ENCODE measurements at regions of chr14 and their contacts with region 1.

Region 1: DNA sequence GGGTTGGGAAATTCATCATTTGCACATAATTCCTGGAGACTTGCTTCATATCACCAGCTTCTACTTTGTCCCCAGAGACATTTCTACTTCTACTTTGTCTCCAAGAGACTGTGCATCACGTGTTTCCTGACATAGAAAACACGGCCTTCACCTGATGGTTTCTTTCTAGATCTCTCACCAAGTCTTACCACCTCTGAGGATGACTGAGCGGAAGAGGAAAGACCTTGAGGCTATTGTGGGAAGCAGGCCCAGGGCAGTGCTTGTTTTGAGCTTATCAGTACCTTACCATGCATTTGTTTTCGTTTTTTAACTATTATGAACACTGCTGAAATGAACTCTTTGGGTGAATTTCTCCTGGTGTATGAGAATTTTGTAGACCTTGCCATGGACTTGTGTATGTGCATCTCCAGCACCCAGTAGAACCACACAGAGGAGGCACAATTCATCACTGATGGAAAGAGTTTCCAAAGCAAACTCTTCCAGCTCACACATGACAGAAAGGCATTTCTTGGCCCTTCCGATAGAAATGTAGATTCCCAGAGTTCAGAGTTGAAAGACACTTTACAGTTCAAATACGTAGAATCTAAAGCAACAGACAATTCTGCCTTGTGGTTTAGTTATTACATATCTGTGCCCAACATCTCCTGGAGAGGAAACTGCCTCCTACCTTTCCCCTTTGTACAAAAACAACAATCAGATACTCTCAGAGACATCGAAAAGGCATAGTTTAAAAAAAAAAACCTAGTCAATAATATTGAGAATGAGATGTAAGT is 434.7 kb downstream of the FUT8 start:
- DNase-seq: peak; percentile 88 to 93 (median 90)
- H3K4me3 ChIP-seq: peak overlapping the region; percentile 30 to 43
- H3K4me3 Mint-ChIP-seq: peak overlapping the region; percentile 65 to 90 (median 80)
- H3K27ac ChIP-seq: peak overlapping the region; percentile 57
- H3K27ac Mint-ChIP-seq: peak overlapping the region; percentile 91 to 98 (median 96)
- H3K4me1 ChIP-seq: peaks cover 98% of the 10 kb centered on the region
- H3K4me1 Mint-ChIP-seq: peaks cover 64 to 92% (median 79%) of the 10 kb centered on the region in 4 donors
- H3K27me3 ChIP-seq: no peaks in the 10 kb centered on the region
- H3K27me3 Mint-ChIP-seq: no peaks in the 10 kb centered on the region

Region 2: DNA sequence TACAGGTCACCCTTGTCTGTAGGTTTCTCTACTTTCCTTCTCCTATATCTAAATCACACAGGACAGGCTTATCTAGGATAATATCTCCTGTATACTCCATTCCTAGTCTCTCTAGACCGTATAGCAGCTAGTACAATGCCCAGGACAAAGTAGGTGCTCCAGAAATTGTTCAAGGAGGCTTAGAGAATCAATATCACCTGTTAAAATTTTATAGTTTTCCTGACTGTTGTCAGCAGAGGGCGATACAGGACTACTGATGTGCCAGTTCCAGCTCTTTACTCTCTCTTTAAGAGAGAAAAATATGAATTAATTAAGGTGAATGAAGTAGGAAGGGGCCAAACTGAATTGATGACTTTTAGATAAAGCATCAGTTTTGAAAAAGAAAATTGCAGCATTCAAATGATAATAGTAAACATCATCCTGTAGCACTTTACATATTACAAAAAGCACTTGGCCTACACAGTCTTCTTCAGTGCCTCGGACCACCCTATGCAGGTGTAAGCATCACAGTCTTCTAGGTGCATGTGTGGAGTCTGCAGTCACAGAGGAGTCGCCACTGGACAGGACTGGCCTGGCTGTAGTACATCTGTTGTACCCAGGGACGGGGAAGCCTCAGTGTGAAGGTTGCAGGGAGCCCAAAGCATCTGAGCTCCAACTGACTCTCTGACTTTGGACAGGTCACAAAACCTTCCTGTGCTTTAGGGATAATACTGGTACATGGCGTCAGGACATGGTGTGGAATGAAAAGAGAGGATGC is 683.0 kb before region 1 on chr14:
- CTCF ChIA-PET with region 1: interaction called, 6 read pairs
- POLR2A ChIA-PET with region 1: interaction called, 10 read pairs
- intact Hi-C with region 1: no loop called
- DNase-seq: peak in 4 of 5 donors; percentile 57 to 64 (median 59)
- H3K4me3 ChIP-seq: no peak overlapping the region
- H3K4me3 Mint-ChIP-seq: no peak overlapping the region
- H3K27ac ChIP-seq: no peak overlapping the region
- H3K27ac Mint-ChIP-seq: no peak overlapping the region
- H3K4me1 ChIP-seq: no peaks in the 10 kb centered on the region
- H3K4me1 Mint-ChIP-seq: peaks cover 0 to 7% (median 5%) of the 10 kb centered on the region in 4 donors
- H3K27me3 ChIP-seq: no peaks in the 10 kb centered on the region
- H3K27me3 Mint-ChIP-seq: no peaks in the 10 kb centered on the region

Region 3: DNA sequence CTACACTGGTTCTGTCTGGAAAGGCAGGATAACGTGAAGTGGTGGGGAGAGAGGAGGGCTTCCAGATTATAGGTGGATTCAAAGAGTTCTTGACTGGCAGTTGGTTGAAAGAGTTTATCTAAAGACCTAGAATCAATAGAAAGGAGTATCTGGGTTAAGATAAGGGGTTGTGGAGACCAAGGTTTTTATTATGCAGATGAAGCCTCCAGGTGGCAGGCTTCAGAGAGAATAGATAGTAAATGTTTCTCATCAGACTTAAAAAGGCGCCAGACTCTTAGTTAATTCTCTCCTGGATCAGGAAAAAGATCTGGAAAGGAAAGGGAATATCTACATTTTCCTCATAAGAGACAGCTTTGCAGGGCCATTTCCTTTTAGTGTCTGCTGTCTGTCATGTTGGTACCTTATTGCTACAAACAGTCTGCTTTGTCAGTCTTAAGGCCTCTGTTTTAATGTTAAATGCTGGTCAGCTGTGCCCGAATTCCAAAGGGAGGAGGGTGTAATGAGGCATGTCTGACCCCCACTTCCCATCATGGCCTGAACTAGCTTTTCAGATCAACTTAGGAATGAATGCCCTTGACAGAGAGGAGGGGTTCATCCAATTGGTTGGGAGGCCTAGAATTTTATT is 33.4 kb before region 1 on chr14:
- CTCF ChIA-PET with region 1: no interaction called
- POLR2A ChIA-PET with region 1: no interaction called
- intact Hi-C with region 1: no loop called
- DNase-seq: peak in 1 of 5 donors; percentile 3
- H3K4me3 ChIP-seq: no peak overlapping the region
- H3K4me3 Mint-ChIP-seq: peak overlapping the region in 1 of 8 donors; percentile 20
- H3K27ac ChIP-seq: no peak overlapping the region
- H3K27ac Mint-ChIP-seq: no peak overlapping the region
- H3K4me1 ChIP-seq: no peaks in the 10 kb centered on the region
- H3K4me1 Mint-ChIP-seq: peaks cover 0 to 5% (median 0%) of the 10 kb centered on the region in 4 donors
- H3K27me3 ChIP-seq: no peaks in the 10 kb centered on the region
- H3K27me3 Mint-ChIP-seq: no peaks in the 10 kb centered on the region

Region 4: GRCh38 chr14:65860956-65861611 is 13.8 kb after region 1 on chr14:
- CTCF ChIA-PET with region 1: interaction called, 19 read pairs
- POLR2A ChIA-PET with region 1: interaction called, 52 read pairs
- intact Hi-C with region 1: loop called (anchors 2 kb)
- DNase-seq: peak in 4 of 5 donors; percentile 31 to 51 (median 38)
- H3K4me3 ChIP-seq: no peak overlapping the region
- H3K4me3 Mint-ChIP-seq: peak overlapping the region in 6 of 8 donors; percentile 0 to 74 (median 58)
- H3K27ac ChIP-seq: no peak overlapping the region
- H3K27ac Mint-ChIP-seq: peak overlapping the region; percentile 0 to 62 (median 14)
- H3K4me1 ChIP-seq: peaks cover 47% of the 10 kb centered on the region
- H3K4me1 Mint-ChIP-seq: peaks cover 45 to 65% (median 52%) of the 10 kb centered on the region in 4 donors
- H3K27me3 ChIP-seq: no peaks in the 10 kb centered on the region
- H3K27me3 Mint-ChIP-seq: no peaks in the 10 kb centered on the region

Region 5: DNA sequence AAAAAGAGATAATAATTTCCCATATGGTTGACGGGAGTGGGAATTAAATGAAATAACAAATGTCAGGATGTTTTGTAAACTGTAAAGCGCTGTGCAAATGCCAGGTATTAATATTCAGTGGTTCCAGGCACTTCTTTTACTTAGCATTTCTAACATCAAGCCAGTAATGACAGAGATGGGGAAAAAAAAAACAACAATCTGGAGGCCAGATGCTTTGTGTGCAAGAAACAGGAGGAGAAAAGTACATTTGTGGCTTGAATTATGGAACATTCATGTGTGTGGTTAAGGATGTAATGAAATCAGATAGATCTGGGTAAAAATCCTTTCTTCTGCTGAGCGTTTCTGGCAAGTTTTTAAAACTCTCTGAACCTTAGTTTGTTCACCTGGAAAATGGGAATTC is 74.9 kb after region 1 on chr14:
- CTCF ChIA-PET with region 1: interaction called, 15 read pairs
- POLR2A ChIA-PET with region 1: interaction called, 102 read pairs
- intact Hi-C with region 1: loop called (anchors 1 kb)
- DNase-seq: no peak
- H3K4me3 ChIP-seq: no peak overlapping the region
- H3K4me3 Mint-ChIP-seq: no peak overlapping the region
- H3K27ac ChIP-seq: no peak overlapping the region
- H3K27ac Mint-ChIP-seq: no peak overlapping the region
- H3K4me1 ChIP-seq: peaks cover 21% of the 10 kb centered on the region
- H3K4me1 Mint-ChIP-seq: peaks cover 19 to 51% (median 27%) of the 10 kb centered on the region in 4 donors
- H3K27me3 ChIP-seq: no peaks in the 10 kb centered on the region
- H3K27me3 Mint-ChIP-seq: no peaks in the 10 kb centered on the region

Region 6: GRCh38 chr14:65940056-65940733 is 92.9 kb after region 1 on chr14:
- CTCF ChIA-PET with region 1: no interaction called
- POLR2A ChIA-PET with region 1: interaction called, 12 read pairs
- intact Hi-C with region 1: no loop called
- DNase-seq: no peak
- H3K4me3 ChIP-seq: no peak overlapping the region
- H3K4me3 Mint-ChIP-seq: no peak overlapping the region
- H3K27ac ChIP-seq: no peak overlapping the region
- H3K27ac Mint-ChIP-seq: no peak overlapping the region
- H3K4me1 ChIP-seq: peaks cover 58% of the 10 kb centered on the region
- H3K4me1 Mint-ChIP-seq: peaks cover 31 to 65% (median 55%) of the 10 kb centered on the region in 4 donors
- H3K27me3 ChIP-seq: no peaks in the 10 kb centered on the region
- H3K27me3 Mint-ChIP-seq: no peaks in the 10 kb centered on the region